Activated CD8-positive, alpha-beta T cell treated with anti-CD3 and anti-CD28 coated beads for 36 hours (primary cell): ENCODE measurements at regions of chr12 and their contacts with region 1.

Region 1: GRCh38 chr12:57124259-57124877 is 3.9 kb upstream of the LRP1 start:
- DNase-seq: peak; percentile 89
- ATAC-seq: peak; percentile 75
- H3K4me3 Mint-ChIP-seq: no peak overlapping the region
- H3K27ac Mint-ChIP-seq: no peak overlapping the region
- H3K4me1 Mint-ChIP-seq: peaks cover 5% of the 10 kb centered on the region
- H3K27me3 Mint-ChIP-seq: no peaks in the 10 kb centered on the region
- CTCF ChIP-seq: peak; percentile 91

Region 2: GRCh38 chr12:57139796-57140649 is 15.7 kb after region 1 on chr12:
- CTCF ChIA-PET with region 1: interaction called, 12 read pairs
- POLR2A ChIA-PET with region 1: interaction called, 3 read pairs
- intact Hi-C with region 1: no loop called
- DNase-seq: no peak
- ATAC-seq: no peak
- H3K4me3 Mint-ChIP-seq: no peak overlapping the region
- H3K27ac Mint-ChIP-seq: no peak overlapping the region
- H3K4me1 Mint-ChIP-seq: peaks cover 7% of the 10 kb centered on the region
- H3K27me3 Mint-ChIP-seq: no peaks in the 10 kb centered on the region
- CTCF ChIP-seq: no peak

Region 3: GRCh38 chr12:57175428-57176138 is 51.2 kb after region 1 on chr12:
- CTCF ChIA-PET with region 1: interaction called, 153 read pairs
- POLR2A ChIA-PET with region 1: interaction called, 4 read pairs
- intact Hi-C with region 1: loop called (anchors 5 kb)
- DNase-seq: peak; percentile 72
- ATAC-seq: peak; percentile 45
- H3K4me3 Mint-ChIP-seq: no peak overlapping the region
- H3K27ac Mint-ChIP-seq: no peak overlapping the region
- H3K4me1 Mint-ChIP-seq: no peaks in the 10 kb centered on the region
- H3K27me3 Mint-ChIP-seq: no peaks in the 10 kb centered on the region
- CTCF ChIP-seq: peak; percentile 69

Region 4: GRCh38 chr12:57190037-57190436 is 65.7 kb after region 1 on chr12:
- CTCF ChIA-PET with region 1: interaction called, 143 read pairs
- POLR2A ChIA-PET with region 1: interaction called, 3 read pairs
- intact Hi-C with region 1: no loop called
- DNase-seq: no peak
- ATAC-seq: no peak
- H3K4me3 Mint-ChIP-seq: no peak overlapping the region
- H3K27ac Mint-ChIP-seq: no peak overlapping the region
- H3K4me1 Mint-ChIP-seq: no peaks in the 10 kb centered on the region
- H3K27me3 Mint-ChIP-seq: no peaks in the 10 kb centered on the region
- CTCF ChIP-seq: no peak

Region 5: GRCh38 chr12:57238854-57239554 is 114.6 kb after region 1 on chr12:
- CTCF ChIA-PET with region 1: interaction called, 12 read pairs
- POLR2A ChIA-PET with region 1: no interaction called
- intact Hi-C with region 1: no loop called
- DNase-seq: peak; percentile 92
- ATAC-seq: peak; percentile 73
- H3K4me3 Mint-ChIP-seq: peak overlapping the region; percentile 83
- H3K27ac Mint-ChIP-seq: no peak overlapping the region
- H3K4me1 Mint-ChIP-seq: peaks cover 62% of the 10 kb centered on the region
- H3K27me3 Mint-ChIP-seq: peaks cover 39% of the 10 kb centered on the region
- CTCF ChIP-seq: peak; percentile 100